Posterior cingulate gyrus (tissue), 11 donors: ENCODE measurements at regions of chr15 and their contacts with region 1.

Region 1: DNA sequence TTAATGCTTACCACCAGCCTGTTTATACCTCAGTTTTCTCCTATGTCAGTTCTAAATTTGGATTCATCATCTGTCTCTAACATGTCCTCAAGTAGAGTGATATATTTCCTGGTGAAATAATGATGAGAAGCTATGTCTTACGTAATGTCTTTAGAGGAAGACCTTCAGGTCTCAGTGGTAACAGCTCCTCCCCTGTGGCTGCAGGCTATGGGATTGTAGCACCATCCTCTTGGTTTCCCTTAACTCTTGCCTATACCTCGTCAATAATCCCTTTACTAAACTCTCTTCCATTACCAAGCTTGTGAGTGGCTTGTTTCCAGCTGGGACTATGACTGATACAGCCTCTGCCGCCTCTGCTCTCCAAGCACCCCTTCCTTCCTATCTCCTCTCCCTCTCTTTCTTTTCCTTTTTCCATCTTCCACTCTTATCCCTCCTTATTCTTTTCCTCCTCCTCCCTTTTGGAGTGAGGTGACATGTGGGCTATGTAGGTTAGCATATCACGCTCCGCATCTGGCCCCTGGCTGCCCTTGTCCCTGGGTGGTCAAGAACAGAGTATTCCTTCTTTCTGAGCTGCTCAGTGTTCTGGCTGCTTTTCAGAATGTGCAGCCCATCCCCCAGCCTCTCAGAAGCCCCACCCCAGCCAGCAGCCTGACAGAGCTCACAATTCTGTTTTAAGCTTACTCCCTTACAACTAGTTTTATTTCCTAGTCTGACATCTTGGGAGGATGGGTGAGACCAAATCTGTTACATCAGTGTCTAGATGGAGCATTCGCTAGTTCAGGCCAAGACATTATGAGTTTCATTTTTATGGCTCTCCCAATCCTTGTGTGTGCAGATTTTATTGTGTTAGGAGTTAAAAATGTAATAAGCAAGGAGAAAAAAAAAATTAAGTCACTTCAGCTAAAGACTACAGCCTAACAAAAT is 75.0 kb upstream of the RNU6-1 start:
- DNase-seq: peak in 5 of 10 donors; percentile 13 to 68 (median 29)

Region 2: GRCh38 chr15:67967871-67968431 is 53.2 kb after region 1 on chr15:
- intact Hi-C with region 1: loop called (anchors 10 kb)
- DNase-seq: peak; percentile 55 to 98 (median 82)